H1 (cell line): ENCODE measurements at regions of chr19 and their contacts with region 1.

Region 1: GRCh38 chr19:12766051-12766521 is 9.3 kb downstream of the HOOK2 start:
- DNase-seq: peak in 1 of 2 experiments; percentile 61
- H3K4me3 ChIP-seq: no peak overlapping the region
- H3K27ac ChIP-seq: no peak overlapping the region
- H3K4me1 ChIP-seq: peaks cover 0 to 8% (median 4%) of the 10 kb centered on the region in 4 experiments; a peak in 6 of 7 replicates
- H3K27me3 ChIP-seq: no peaks in the 10 kb centered on the region
- CTCF ChIP-seq: no peak
- EP300 ChIP-seq: no peak
- POLR2A ChIP-seq: no peak
- RAD21 ChIP-seq: no peak

Region 2: GRCh38 chr19:12749938-12750521 is 16.1 kb before region 1 on chr19:
- CTCF ChIA-PET with region 1: interaction called, 85 read pairs
- POLR2A ChIA-PET with region 1: interaction called, 70 read pairs
- DNase-seq: no peak
- H3K4me3 ChIP-seq: no peak overlapping the region
- H3K27ac ChIP-seq: no peak overlapping the region
- H3K4me1 ChIP-seq: peaks cover 0 to 10% (median 4%) of the 10 kb centered on the region in 4 experiments; a peak in 4 of 7 replicates
- H3K27me3 ChIP-seq: no peaks in the 10 kb centered on the region; a peak in 3 of 7 replicates
- CTCF ChIP-seq: no peak
- EP300 ChIP-seq: no peak
- POLR2A ChIP-seq: no peak
- RAD21 ChIP-seq: no peak

Region 3: GRCh38 chr19:12777217-12778016 is 11.3 kb after region 1 on chr19:
- CTCF ChIA-PET with region 1: interaction called, 137 read pairs
- POLR2A ChIA-PET with region 1: interaction called, 12 read pairs
- DNase-seq: peak in 1 of 2 experiments; percentile 95
- H3K4me3 ChIP-seq: peak overlapping the region; percentile 40 to 69 (median 62)
- H3K27ac ChIP-seq: no peak overlapping the region
- H3K4me1 ChIP-seq: peaks cover 0 to 22% (median 17%) of the 10 kb centered on the region in 4 experiments; a peak in 6 of 7 replicates
- H3K27me3 ChIP-seq: no peaks in the 10 kb centered on the region
- CTCF ChIP-seq: peak; percentile 81 to 92 (median 81)
- EP300 ChIP-seq: peak in 1 of 2 experiments; percentile 41; a peak in 1 of 3 replicates
- POLR2A ChIP-seq: no peak
- RAD21 ChIP-seq: peak; percentile 74 to 84